AG04450 (cell line): ENCODE measurements at regions of chr2 and their contacts with region 1.

Region 1: GRCh38 chr2:202265467-202266277 is at the start of gene NOP58:
- DNase-seq: peak; percentile 84
- H3K4me3 ChIP-seq: peak within 1 kb of the TSS; percentile 99
- H3K27ac ChIP-seq: peak within 1 kb of the TSS; percentile 96
- H3K27me3 ChIP-seq: no peaks in the 10 kb centered on the region
- CTCF ChIP-seq: no peak
- polyA plus RNA-seq, gene NOP58: 41.9 and 63.4 TPM in 2 replicates

Region 2: DNA sequence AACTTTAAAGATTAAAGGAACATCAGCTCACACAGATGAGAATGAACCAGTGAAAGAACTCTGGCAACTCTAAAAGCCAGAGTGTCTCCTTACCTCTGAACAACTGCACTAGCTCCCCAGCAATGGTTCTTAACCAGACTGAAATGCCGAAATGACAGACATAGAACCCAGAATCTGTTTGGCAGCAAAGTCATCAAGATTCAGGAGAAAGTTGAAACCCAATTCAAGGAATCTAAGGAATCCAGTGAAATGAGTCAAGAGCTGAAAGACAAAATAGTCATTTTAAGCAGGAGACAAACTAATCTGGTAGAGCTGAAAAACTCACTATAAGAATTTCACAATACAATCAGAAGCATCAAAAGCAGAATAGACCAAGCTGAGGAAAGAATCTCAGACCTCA is 742.2 kb before region 1 on chr2:
- CTCF ChIA-PET with region 1: no interaction called
- POLR2A ChIA-PET with region 1: no interaction called
- DNase-seq: no peak
- H3K4me3 ChIP-seq: no peak overlapping the region
- H3K27ac ChIP-seq: no peak overlapping the region
- H3K27me3 ChIP-seq: no peaks in the 10 kb centered on the region
- CTCF ChIP-seq: no peak

Region 3: DNA sequence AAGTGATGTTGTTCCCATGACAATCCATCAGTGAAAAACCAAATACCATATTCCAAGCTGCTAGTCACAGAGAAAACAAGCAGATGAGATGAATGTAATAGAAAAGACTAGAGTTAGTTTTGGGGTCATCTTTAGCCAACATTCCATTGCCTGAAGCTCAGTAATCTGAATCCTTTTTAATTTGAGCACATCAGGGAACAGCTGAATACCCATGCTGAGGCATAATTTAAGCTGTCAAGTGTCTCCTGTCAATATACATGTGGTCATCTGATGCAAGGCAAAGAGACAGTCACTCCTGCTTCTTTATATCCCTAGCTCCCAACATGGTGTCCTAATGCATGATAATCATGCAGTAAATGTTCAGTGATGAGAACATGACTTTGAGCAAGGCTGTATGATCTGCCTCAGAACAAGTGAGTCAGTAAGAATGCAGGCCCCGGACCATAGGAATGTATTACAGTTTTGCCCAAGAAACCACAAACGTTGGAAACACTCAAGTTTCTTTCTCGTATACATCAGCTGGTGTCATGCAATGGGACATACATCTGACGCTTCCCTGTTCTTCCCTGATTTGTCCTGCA is 411.4 kb before region 1 on chr2:
- CTCF ChIA-PET with region 1: no interaction called
- POLR2A ChIA-PET with region 1: no interaction called
- DNase-seq: peak; percentile 93
- H3K4me3 ChIP-seq: peak overlapping the region; percentile 24
- H3K27ac ChIP-seq: peak overlapping the region; percentile 97
- H3K27me3 ChIP-seq: no peaks in the 10 kb centered on the region
- CTCF ChIP-seq: no peak

Region 4: GRCh38 chr2:202193881-202194353 is 71.8 kb before region 1 on chr2:
- CTCF ChIA-PET with region 1: no interaction called
- POLR2A ChIA-PET with region 1: interaction called, 10 read pairs
- DNase-seq: no peak
- H3K4me3 ChIP-seq: no peak overlapping the region
- H3K27ac ChIP-seq: no peak overlapping the region
- H3K27me3 ChIP-seq: no peaks in the 10 kb centered on the region
- CTCF ChIP-seq: no peak

Region 5: GRCh38 chr2:202278944-202279343 is 13.3 kb after region 1 on chr2:
- CTCF ChIA-PET with region 1: interaction called, 15 read pairs
- POLR2A ChIA-PET with region 1: no interaction called
- DNase-seq: no peak
- H3K4me3 ChIP-seq: no peak overlapping the region
- H3K27ac ChIP-seq: no peak overlapping the region
- H3K27me3 ChIP-seq: no peaks in the 10 kb centered on the region
- CTCF ChIP-seq: peak; percentile 75

Region 6: GRCh38 chr2:202290970-202291369 is 25.3 kb after region 1 on chr2:
- CTCF ChIA-PET with region 1: no interaction called
- POLR2A ChIA-PET with region 1: no interaction called
- DNase-seq: peak; percentile 16
- H3K4me3 ChIP-seq: no peak overlapping the region
- H3K27ac ChIP-seq: no peak overlapping the region
- H3K27me3 ChIP-seq: no peaks in the 10 kb centered on the region
- CTCF ChIP-seq: no peak

Region 7: GRCh38 chr2:202932425-202933138 is 666.9 kb after region 1 on chr2:
- CTCF ChIA-PET with region 1: no interaction called
- POLR2A ChIA-PET with region 1: interaction called, 14 read pairs
- DNase-seq: no peak
- H3K4me3 ChIP-seq: no peak overlapping the region
- H3K27ac ChIP-seq: no peak overlapping the region
- H3K27me3 ChIP-seq: no peaks in the 10 kb centered on the region
- CTCF ChIP-seq: no peak